Naive thymus-derived CD8-positive, alpha-beta T cell (primary cell): ENCODE measurements at regions of chr18 and their contacts with region 1.

Region 1: GRCh38 chr18:63422087-63422809 is at the start of gene VPS4B:
- DNase-seq: peak; percentile 97 to 100 (median 100)
- ATAC-seq: peak; percentile 91 to 95
- H3K4me3 Mint-ChIP-seq: peak within 1 kb of the TSS; percentile 93 to 99 (median 96)
- H3K27ac Mint-ChIP-seq: peak within 1 kb of the TSS; percentile 96 to 99 (median 98)
- H3K4me1 Mint-ChIP-seq: peaks cover 13 to 37% (median 32%) of the 10 kb centered on the region in 4 donors
- H3K27me3 Mint-ChIP-seq: peaks cover 0 to 8% (median 3%) of the 10 kb centered on the region in 5 donors
- polyA plus RNA-seq, gene VPS4B: 41.0 to 57.8 (median 48.8) TPM

Region 2: DNA sequence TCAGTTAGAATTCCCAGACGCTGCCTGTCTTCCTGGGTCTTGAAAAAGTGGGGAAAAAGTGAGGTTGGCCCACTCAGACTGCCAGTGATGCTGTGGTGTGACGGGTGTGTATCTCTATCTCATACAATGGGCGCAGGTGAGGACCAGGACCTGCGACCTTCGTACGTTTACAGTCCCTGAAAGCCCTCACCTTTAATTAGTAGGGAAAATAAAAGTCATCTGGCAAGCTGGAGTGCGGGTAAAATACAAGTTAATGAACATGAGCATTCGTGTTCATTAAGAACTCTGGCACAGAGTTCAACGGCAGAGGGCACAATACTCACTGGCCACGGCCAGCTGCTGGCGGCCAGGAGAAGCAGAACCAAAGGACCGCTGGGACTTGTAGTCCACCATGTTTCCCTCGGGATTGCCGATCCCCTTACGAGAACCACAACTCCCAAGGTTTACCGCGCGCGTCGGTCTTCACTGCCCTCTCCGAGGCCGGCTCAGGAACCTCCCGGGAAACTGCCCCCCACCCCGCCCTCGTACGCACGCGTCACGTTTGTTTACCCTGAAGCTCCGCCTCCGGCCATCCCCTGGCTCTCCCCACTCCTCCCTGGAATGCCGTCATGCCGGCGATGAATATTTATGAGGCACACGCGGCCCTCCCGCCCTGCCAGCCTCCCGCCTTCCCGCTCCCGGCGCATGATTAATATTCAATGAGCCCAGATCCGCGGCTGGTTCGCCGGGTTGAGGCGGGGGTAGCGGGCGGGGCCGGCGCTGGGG is 707.4 kb before region 1 on chr18:
- POLR2A ChIA-PET with region 1: interaction called, 10 read pairs
- DNase-seq: peak; percentile 81 to 98 (median 90)
- ATAC-seq: peak; percentile 72 to 79
- H3K4me3 Mint-ChIP-seq: peak overlapping the region; percentile 82 to 96 (median 93)
- H3K27ac Mint-ChIP-seq: peak overlapping the region; percentile 87 to 99 (median 98)
- H3K4me1 Mint-ChIP-seq: peaks cover 10 to 35% (median 29%) of the 10 kb centered on the region in 4 donors
- H3K27me3 Mint-ChIP-seq: no peaks in the 10 kb centered on the region

Region 3: GRCh38 chr18:63098018-63098981 is 323.9 kb before region 1 on chr18:
- POLR2A ChIA-PET with region 1: no interaction called
- DNase-seq: peak in 7 of 10 donors; percentile 18 to 72 (median 54)
- ATAC-seq: peak; percentile 75 to 84
- H3K4me3 Mint-ChIP-seq: peak overlapping the region; percentile 32 to 80 (median 67)
- H3K27ac Mint-ChIP-seq: peak overlapping the region; percentile 16 to 88 (median 82)
- H3K4me1 Mint-ChIP-seq: peaks cover 36 to 50% (median 45%) of the 10 kb centered on the region in 4 donors
- H3K27me3 Mint-ChIP-seq: peaks cover 0 to 5% (median 0%) of the 10 kb centered on the region in 5 donors

Region 4: DNA sequence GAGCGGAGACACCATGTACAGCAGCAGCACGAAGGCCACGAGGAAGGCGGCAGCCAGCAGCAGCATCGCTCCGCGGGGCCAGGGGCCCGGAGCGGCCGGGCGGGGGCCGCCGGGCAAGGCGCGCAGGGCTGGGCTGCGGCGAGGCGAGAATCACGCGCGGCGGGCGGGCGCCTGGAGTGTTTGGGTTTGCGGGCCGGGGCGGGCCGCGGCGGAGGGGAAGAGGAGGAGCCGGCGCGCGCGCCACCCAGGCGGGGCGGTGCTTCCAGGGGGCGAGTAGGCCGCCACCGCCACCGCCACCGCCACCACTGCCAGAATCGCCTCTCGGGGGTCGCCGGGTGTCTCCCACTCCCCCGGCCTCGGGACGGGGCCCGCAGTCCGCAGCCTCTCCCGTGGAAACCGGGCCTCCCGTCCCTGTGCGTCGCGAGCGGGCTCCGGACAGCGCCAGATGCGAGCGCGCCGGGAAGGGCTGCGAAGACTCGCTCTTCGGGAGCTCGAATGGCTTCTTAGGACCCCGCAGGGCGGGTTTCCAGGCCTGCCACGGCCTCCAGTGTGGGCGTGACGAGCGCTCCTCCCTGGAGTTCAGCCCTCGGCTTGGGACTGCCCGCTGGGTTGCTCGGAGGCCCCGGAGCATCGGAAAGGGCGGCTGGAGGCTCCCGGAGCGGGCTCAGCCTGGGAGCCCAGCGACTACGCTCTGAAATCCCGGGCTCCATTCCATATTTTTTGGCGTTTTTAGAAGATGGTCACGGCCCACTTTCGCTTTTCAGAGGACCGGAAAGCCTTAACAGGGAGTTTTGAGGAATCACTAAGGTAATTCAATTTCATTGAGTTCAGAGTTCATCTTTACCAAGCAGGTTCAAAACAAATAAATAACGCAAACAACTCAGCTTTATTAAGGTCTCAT is 54.9 kb before region 1 on chr18 and contains the start of gene KDSR:
- POLR2A ChIA-PET with region 1: interaction called, 11 read pairs
- DNase-seq: peak; percentile 68 to 86 (median 78)
- ATAC-seq: peak; percentile 88 to 89
- H3K4me3 Mint-ChIP-seq: peak within 1 kb of the TSS; percentile 85 to 98 (median 94)
- H3K27ac Mint-ChIP-seq: peak within 1 kb of the TSS; percentile 51 to 93 (median 89)
- H3K4me1 Mint-ChIP-seq: peaks cover 14 to 44% (median 41%) of the 10 kb centered on the region in 4 donors
- H3K27me3 Mint-ChIP-seq: no peaks in the 10 kb centered on the region
- polyA plus RNA-seq, gene KDSR: 55.9 to 66.9 (median 65.4) TPM